CD8-positive, alpha-beta memory T cell (primary cell): ENCODE measurements at regions of chr5 and their contacts with region 1.

Region 1: GRCh38 chr5:177497292-177498033 is at the start of gene PDLIM7:
- DNase-seq: peak; percentile 89 to 95 (median 90)
- H3K4me3 ChIP-seq: peak within 1 kb of the TSS; percentile 81
- H3K4me3 Mint-ChIP-seq: peak within 1 kb of the TSS; percentile 69 to 89 (median 86)
- H3K27ac ChIP-seq: peak within 1 kb of the TSS; percentile 69
- H3K27ac Mint-ChIP-seq: peak within 1 kb of the TSS in 7 of 8 donors; percentile 0 to 91 (median 75)
- H3K4me1 ChIP-seq: peaks cover 22% of the 10 kb centered on the region
- H3K4me1 Mint-ChIP-seq: peaks cover 13 to 42% (median 23%) of the 10 kb centered on the region in 3 donors
- H3K27me3 ChIP-seq: no peaks in the 10 kb centered on the region
- H3K27me3 Mint-ChIP-seq: peaks cover 0 to 2% of the 10 kb centered on the region in 2 donors
- total RNA-seq, gene PDLIM7: 28.4 to 30.4 TPM

Region 2: DNA sequence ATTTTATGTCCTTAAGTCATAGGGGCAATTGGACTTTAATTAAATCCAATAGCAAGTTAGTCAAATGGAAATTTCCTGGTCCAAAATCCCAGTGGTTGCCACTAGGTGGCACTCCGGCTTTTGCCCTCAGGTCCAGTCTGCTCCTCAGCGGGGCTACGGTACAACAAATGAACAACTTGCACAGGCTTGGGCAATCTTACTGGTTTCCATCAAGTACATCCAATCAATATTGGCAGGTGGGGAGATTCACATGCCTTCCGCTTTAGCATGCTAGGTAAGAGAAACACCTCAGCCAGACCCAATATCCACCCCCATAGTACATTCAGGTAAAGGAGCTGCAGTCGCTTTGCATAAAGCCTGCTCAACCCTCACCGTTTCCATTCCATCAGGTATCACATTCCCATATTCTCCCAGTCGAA is 179.5 kb before region 1 on chr5:
- CTCF ChIA-PET with region 1: interaction called, 14 read pairs
- POLR2A ChIA-PET with region 1: no interaction called
- DNase-seq: peak; percentile 55 to 80 (median 63)
- H3K4me3 ChIP-seq: no peak overlapping the region
- H3K4me3 Mint-ChIP-seq: no peak overlapping the region
- H3K27ac ChIP-seq: no peak overlapping the region
- H3K27ac Mint-ChIP-seq: peak overlapping the region in 3 of 8 donors; percentile 5 to 48 (median 37)
- H3K4me1 ChIP-seq: peaks cover 6% of the 10 kb centered on the region
- H3K4me1 Mint-ChIP-seq: peaks cover 11 to 19% (median 19%) of the 10 kb centered on the region in 3 donors
- H3K27me3 ChIP-seq: no peaks in the 10 kb centered on the region
- H3K27me3 Mint-ChIP-seq: peaks cover 0 to 3% of the 10 kb centered on the region in 2 donors

Region 3: DNA sequence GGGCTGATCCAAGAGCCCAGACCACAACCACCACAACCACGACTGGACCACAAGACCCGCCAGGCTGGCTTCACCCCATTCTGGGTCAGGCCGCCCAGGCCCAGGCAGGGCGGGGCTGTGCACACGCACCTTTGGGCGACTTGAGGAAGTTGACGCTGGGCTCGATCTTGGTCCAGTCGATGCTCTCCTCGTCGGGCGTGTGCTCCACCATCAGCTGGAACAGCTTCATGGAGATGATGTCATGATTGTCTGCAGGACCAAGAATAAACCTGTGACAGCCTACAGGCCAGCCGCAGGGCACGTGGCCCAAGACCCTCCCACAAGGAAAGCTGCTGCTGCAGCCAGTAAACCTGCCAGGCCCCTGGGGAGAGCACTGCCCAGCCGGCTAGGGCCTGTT is 163.3 kb before region 1 on chr5:
- CTCF ChIA-PET with region 1: no interaction called
- POLR2A ChIA-PET with region 1: no interaction called
- DNase-seq: no peak
- H3K4me3 ChIP-seq: no peak overlapping the region
- H3K4me3 Mint-ChIP-seq: no peak overlapping the region
- H3K27ac ChIP-seq: no peak overlapping the region
- H3K27ac Mint-ChIP-seq: peak overlapping the region in 1 of 8 donors; percentile 21
- H3K4me1 ChIP-seq: peaks cover 5% of the 10 kb centered on the region
- H3K4me1 Mint-ChIP-seq: peaks cover 5 to 21% (median 11%) of the 10 kb centered on the region in 3 donors
- H3K27me3 ChIP-seq: no peaks in the 10 kb centered on the region
- H3K27me3 Mint-ChIP-seq: no peaks in the 10 kb centered on the region

Region 4: GRCh38 chr5:177473461-177474001 is 23.9 kb before region 1 on chr5 and contains the start of gene DBN1:
- CTCF ChIA-PET with region 1: interaction called, 17 read pairs
- POLR2A ChIA-PET with region 1: interaction called, 5 read pairs
- DNase-seq: no peak
- H3K4me3 ChIP-seq: peak within 1 kb of the TSS; percentile 45
- H3K4me3 Mint-ChIP-seq: peak within 1 kb of the TSS; percentile 80 to 94 (median 84)
- H3K27ac ChIP-seq: peak within 1 kb of the TSS; percentile 47
- H3K27ac Mint-ChIP-seq: peak within 1 kb of the TSS; percentile 3 to 92 (median 76)
- H3K4me1 ChIP-seq: peaks cover 30% of the 10 kb centered on the region
- H3K4me1 Mint-ChIP-seq: peaks cover 34 to 56% (median 36%) of the 10 kb centered on the region in 3 donors
- H3K27me3 ChIP-seq: no peaks in the 10 kb centered on the region
- H3K27me3 Mint-ChIP-seq: peaks cover 0 to under 1% of the 10 kb centered on the region in 2 donors
- total RNA-seq, gene DBN1: 47.9 to 50.5 TPM

Region 5: GRCh38 chr5:177516604-177517568 is 19.4 kb after region 1 on chr5 and contains the start of gene DDX41:
- CTCF ChIA-PET with region 1: interaction called, 16 read pairs
- POLR2A ChIA-PET with region 1: no interaction called
- DNase-seq: peak; percentile 91 to 97 (median 94)
- H3K4me3 ChIP-seq: peak within 1 kb of the TSS; percentile 85
- H3K4me3 Mint-ChIP-seq: peak within 1 kb of the TSS; percentile 92 to 100 (median 95)
- H3K27ac ChIP-seq: peak within 1 kb of the TSS; percentile 75
- H3K27ac Mint-ChIP-seq: peak within 1 kb of the TSS; percentile 82 to 98 (median 94)
- H3K4me1 ChIP-seq: peaks cover 29% of the 10 kb centered on the region
- H3K4me1 Mint-ChIP-seq: peaks cover 44 to 67% (median 55%) of the 10 kb centered on the region in 3 donors
- H3K27me3 ChIP-seq: no peaks in the 10 kb centered on the region
- H3K27me3 Mint-ChIP-seq: peaks cover 0 to 2% of the 10 kb centered on the region in 2 donors
- total RNA-seq, gene DDX41: 160 to 164 TPM